ENCODE measurements at regions of chr5 and their contacts with region 1.

Region 1: DNA sequence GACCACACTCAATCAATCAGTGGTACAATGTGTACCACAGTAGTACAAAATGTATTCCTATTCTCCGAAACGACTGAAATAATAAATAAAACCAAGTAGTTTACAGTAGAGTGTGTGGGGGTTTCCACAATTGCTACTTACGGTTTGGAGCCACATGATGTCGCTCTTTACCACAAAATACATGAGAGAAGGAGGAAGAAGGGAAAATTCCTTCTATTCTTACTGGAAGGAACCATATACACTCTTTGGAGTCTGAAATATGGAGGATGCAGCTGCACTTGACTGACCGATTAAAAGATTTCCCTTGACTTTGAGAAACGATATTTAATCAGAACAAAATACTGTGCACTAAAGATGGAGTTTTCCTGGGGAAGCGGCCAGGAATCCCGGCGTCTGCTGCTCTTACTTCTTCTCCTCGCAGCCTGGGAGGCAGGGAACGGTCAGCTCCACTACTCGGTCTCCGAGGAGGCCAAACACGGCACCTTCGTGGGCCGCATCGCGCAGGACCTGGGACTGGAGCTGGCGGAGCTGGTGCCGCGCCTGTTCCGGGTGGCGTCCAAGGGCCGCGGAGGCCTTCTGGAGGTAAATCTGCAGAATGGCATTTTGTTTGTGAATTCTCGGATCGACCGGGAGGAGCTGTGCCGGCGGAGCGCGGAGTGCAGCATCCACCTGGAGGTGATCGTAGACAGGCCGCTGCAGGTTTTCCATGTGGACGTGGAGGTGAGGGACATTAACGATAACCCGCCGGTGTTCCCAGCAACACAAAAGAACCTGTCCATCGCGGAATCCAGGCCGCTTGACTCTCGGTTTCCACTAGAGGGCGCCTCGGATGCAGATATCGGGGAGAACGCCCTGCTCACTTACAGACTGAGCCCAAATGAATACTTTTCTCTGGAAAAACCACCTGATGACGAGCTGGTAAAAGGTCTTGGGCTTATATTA is at the start of gene PCDHA4:
- DNase-seq: peak in 1 of 2 experiments; percentile 94
- H3K4me3 ChIP-seq: peak within 1 kb of the TSS; percentile 80 to 88 (median 85)
- H3K27ac ChIP-seq: peak within 1 kb of the TSS; percentile 31; the same call in 1 of the 2 replicates
- H3K4me1 ChIP-seq: no peaks in the 10 kb centered on the region
- H3K27me3 ChIP-seq: no peaks in the 10 kb centered on the region
- CTCF ChIP-seq: peak; percentile 75 to 81 (median 81)
- EP300 ChIP-seq: no peak
- POLR2A ChIP-seq: peak in 1 of 2 experiments; percentile 59; a peak in 2 of 3 replicates
- RAD21 ChIP-seq: peak; percentile 75 to 76
- total RNA-seq, gene PCDHA4: 5.3 and 5.7 TPM in 2 replicates

Region 2: GRCh38 chr5:140647042-140647341 is 160.1 kb before region 1 on chr5:
- CTCF ChIA-PET with region 1: no interaction called
- POLR2A ChIA-PET with region 1: no interaction called
- DNase-seq: no peak
- H3K4me3 ChIP-seq: peak overlapping the region; percentile 63 to 86 (median 78)
- H3K27ac ChIP-seq: peak overlapping the region; percentile 26; the same call in 1 of the 2 replicates
- H3K4me1 ChIP-seq: peaks cover 0 to 4% (median 0%) of the 10 kb centered on the region in 4 experiments; a peak in 2 of 7 replicates
- H3K27me3 ChIP-seq: no peaks in the 10 kb centered on the region
- CTCF ChIP-seq: no peak
- EP300 ChIP-seq: no peak
- POLR2A ChIP-seq: no peak
- RAD21 ChIP-seq: no peak

Region 3: GRCh38 chr5:140785905-140786686 is 21.0 kb before region 1 on chr5 and contains the start of gene PCDHA1:
- CTCF ChIA-PET with region 1: interaction called, 36 read pairs
- POLR2A ChIA-PET with region 1: interaction called, 5 read pairs
- DNase-seq: no peak
- H3K4me3 ChIP-seq: no peak within 1 kb of the TSS
- H3K27ac ChIP-seq: no peak within 1 kb of the TSS
- H3K4me1 ChIP-seq: no peaks in the 10 kb centered on the region
- H3K27me3 ChIP-seq: no peaks in the 10 kb centered on the region
- CTCF ChIP-seq: peak in 2 of 3 experiments; percentile 35 to 37; a peak in 2 of 4 replicates
- EP300 ChIP-seq: no peak
- POLR2A ChIP-seq: no peak
- RAD21 ChIP-seq: peak; percentile 47 to 59
- total RNA-seq, gene PCDHA1: 0.50 and 0.52 TPM in 2 replicates

Region 4: GRCh38 chr5:140821375-140822280 is 14.5 kb after region 1 on chr5 and contains the start of gene PCDHA5:
- CTCF ChIA-PET with region 1: interaction called, 58 read pairs
- POLR2A ChIA-PET with region 1: interaction called, 8 read pairs
- DNase-seq: no peak
- H3K4me3 ChIP-seq: no peak within 1 kb of the TSS
- H3K27ac ChIP-seq: no peak within 1 kb of the TSS
- H3K4me1 ChIP-seq: no peaks in the 10 kb centered on the region
- H3K27me3 ChIP-seq: no peaks in the 10 kb centered on the region
- CTCF ChIP-seq: peak in 1 of 3 experiments; percentile 10; a peak in 1 of 4 replicates
- EP300 ChIP-seq: no peak
- POLR2A ChIP-seq: no peak
- RAD21 ChIP-seq: no peak
- total RNA-seq, gene PCDHA5: 0.52 and 0.76 TPM in 2 replicates

Region 5: DNA sequence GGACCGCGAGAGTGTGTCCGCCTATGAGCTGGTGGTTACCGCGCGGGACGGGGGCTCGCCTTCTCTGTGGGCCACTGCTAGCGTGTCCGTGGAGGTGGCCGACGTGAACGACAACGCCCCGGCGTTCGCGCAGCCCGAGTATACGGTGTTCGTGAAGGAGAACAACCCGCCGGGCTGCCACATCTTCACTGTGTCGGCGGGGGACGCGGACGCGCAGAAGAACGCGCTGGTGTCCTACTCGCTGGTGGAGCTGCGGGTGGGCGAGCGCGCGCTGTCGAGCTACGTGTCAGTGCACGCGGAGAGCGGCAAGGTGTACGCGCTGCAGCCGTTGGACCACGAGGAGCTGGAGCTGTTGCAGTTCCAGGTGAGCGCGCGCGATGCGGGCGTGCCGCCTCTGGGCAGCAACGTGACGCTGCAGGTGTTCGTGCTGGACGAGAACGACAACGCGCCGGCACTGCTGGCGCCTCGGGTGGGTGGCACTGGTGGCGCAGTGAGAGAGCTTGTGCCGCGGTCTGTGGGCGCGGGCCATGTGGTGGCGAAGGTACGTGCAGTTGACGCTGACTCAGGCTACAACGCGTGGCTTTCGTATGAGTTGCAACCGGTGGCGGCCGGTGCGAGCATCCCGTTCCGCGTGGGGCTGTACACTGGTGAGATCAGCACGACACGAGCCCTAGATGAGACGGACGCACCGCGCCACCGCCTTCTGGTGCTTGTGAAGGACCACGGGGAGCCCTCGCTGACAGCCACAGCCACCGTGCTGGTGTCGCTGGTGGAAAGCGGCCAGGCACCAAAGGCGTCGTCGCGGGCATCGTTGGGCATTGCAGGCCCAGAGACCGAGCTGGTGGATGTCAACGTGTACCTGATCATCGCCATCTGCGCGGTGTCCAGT is 28.8 kb after region 1 on chr5:
- CTCF ChIA-PET with region 1: interaction called, 42 read pairs
- POLR2A ChIA-PET with region 1: interaction called, 3 read pairs
- DNase-seq: no peak
- H3K4me3 ChIP-seq: no peak overlapping the region
- H3K27ac ChIP-seq: no peak overlapping the region
- H3K4me1 ChIP-seq: no peaks in the 10 kb centered on the region
- H3K27me3 ChIP-seq: no peaks in the 10 kb centered on the region
- CTCF ChIP-seq: no peak
- EP300 ChIP-seq: no peak
- POLR2A ChIP-seq: no peak
- RAD21 ChIP-seq: no peak

Region 6: GRCh38 chr5:140868721-140869554 is 61.8 kb after region 1 on chr5 and contains the start of gene PCDHA11:
- CTCF ChIA-PET with region 1: interaction called, 16 read pairs
- POLR2A ChIA-PET with region 1: no interaction called
- DNase-seq: no peak
- H3K4me3 ChIP-seq: peak within 1 kb of the TSS; percentile 54 to 66 (median 58)
- H3K27ac ChIP-seq: peak within 1 kb of the TSS; percentile 37; the same call in 1 of the 2 replicates
- H3K4me1 ChIP-seq: no peaks in the 10 kb centered on the region
- H3K27me3 ChIP-seq: no peaks in the 10 kb centered on the region
- CTCF ChIP-seq: peak; percentile 32 to 68 (median 56)
- EP300 ChIP-seq: no peak
- POLR2A ChIP-seq: peak in 1 of 2 experiments; percentile 46; a peak in 2 of 3 replicates
- RAD21 ChIP-seq: peak; percentile 64 to 72
- total RNA-seq, gene PCDHA11: 6.6 and 6.9 TPM in 2 replicates

Measured in H1 (cell line).